ENCODE measurements at regions of chr20 and their contacts with region 1.

Region 1: GRCh38 chr20:1577906-1578305 is 20.4 kb upstream of the SIRPD start:
- DNase-seq: no peak
- H3K4me3 ChIP-seq: no peak overlapping the region
- H3K27ac ChIP-seq: no peak overlapping the region
- H3K4me1 ChIP-seq: no peaks in the 10 kb centered on the region
- H3K27me3 ChIP-seq: no peaks in the 10 kb centered on the region
- CTCF ChIP-seq: no peak
- POLR2A ChIP-seq: no peak

Region 2: GRCh38 chr20:1375515-1375914 is 202.4 kb before region 1 on chr20:
- intact Hi-C with region 1: no loop called
- DNase-seq: no peak
- H3K4me3 ChIP-seq: no peak overlapping the region
- H3K27ac ChIP-seq: peak overlapping the region in 3 of 4 donors; percentile 3 to 33 (median 17)
- H3K4me1 ChIP-seq: peaks cover 4 to 99% (median 34%) of the 10 kb centered on the region in 3 donors
- H3K27me3 ChIP-seq: no peaks in the 10 kb centered on the region
- CTCF ChIP-seq: no peak
- POLR2A ChIP-seq: no peak

Region 3: DNA sequence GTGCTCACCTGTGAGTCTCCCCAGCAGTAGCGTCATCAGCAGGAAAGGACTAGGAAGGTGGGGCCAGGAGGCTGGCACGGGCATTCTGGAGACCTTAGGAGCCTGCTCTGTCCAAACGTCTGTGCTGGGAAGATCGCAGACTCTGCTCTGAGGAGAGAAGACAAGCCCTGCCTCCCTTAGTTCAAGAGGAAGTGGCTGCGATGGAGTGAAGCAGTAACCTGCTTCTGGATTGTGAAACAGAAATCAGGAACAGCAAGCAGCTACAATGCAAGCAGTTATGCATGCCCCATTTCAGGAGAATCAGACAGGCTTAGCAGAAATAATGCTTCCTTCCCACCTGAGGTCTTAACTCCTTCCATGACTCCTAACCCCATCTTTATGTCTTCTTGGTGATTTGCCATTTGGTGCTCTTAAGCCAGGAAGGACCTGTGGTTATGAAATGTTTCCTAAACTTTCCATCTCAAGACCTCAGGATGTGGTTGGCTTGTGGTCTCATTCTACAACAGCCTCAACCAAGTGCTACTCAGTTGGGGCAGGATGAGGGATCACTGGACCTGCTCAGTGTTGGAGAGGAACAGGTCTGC is 42.0 kb after region 1 on chr20 and contains the start of gene SIRPB1:
- intact Hi-C with region 1: loop called (anchors 2 kb)
- DNase-seq: no peak
- H3K4me3 ChIP-seq: no peak within 1 kb of the TSS
- H3K27ac ChIP-seq: peak within 1 kb of the TSS in 1 of 4 donors; percentile 6
- H3K4me1 ChIP-seq: no peaks in the 10 kb centered on the region
- H3K27me3 ChIP-seq: peaks cover 0 to 4% (median 0%) of the 10 kb centered on the region in 4 donors
- CTCF ChIP-seq: no peak
- POLR2A ChIP-seq: no peak
- total RNA-seq, gene SIRPB1: 0.13 to 3.3 (median 1.0) TPM

Measured in esophagus squamous epithelium (tissue), 5 donors.